Activated CD8-positive, alpha-beta T cell treated with anti-CD3 and anti-CD28 coated beads, Interleukin-2, amount 10 ng/mL, durations not matched to agents 7 days and 5 days (primary cell): ENCODE measurements at regions of chrX and their contacts with region 1.

Region 1: DNA sequence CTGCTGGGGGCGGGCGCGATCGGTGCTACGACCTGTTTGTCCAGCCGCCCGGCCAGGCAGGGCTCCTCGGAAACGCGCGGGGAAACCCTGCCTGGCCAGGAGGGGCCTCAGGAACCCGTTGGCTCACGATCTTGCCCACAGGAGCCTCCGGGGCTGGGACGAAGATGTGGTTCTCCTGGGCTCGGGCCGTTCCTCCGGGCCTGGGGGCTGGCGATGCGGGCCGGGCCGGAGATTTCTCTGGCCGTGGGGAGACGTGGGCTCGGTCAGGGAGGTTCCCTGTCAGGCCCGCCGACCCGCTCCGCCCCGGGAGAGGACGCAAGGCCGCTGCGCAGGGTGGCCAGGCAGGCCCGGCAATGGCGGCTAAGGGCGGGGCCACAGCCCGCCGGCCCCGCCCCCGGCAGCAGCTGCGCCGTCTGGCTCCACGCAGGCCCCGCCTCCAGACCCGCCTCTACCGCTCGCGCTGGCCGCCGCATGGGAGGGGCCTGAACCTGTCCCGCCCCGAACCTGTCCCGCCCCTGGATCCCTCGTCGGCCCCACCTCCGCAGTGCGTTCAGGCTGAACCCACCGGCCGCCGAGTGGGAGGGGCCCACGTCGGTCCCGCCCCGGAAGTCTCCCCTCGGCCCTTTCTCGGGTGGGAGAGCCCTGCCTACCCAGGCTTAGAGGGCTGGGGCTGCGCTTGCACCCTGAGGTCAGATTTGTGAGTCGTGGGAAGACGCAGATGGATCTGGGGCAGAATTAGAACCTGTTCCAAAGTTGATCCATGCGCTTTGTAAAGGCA is at the start of gene FAM3A:
- DNase-seq: peak; percentile 94
- ATAC-seq: peak; percentile 95
- H3K4me3 Mint-ChIP-seq: peak within 1 kb of the TSS; percentile 82
- H3K27ac Mint-ChIP-seq: peak within 1 kb of the TSS; percentile 89
- H3K4me1 Mint-ChIP-seq: peaks cover 33% of the 10 kb centered on the region
- H3K27me3 Mint-ChIP-seq: no peaks in the 10 kb centered on the region
- total RNA-seq, gene FAM3A: 28.5 to 31.6 TPM

Region 2: GRCh38 chrX:154526901-154527675 is 11.0 kb after region 1 on chrX:
- CTCF ChIA-PET with region 1: interaction called, 14 read pairs
- POLR2A ChIA-PET with region 1: no interaction called
- DNase-seq: peak; percentile 75
- ATAC-seq: peak; percentile 93
- H3K4me3 Mint-ChIP-seq: peak overlapping the region; percentile 8
- H3K27ac Mint-ChIP-seq: peak overlapping the region; percentile 84
- H3K4me1 Mint-ChIP-seq: peaks cover 23% of the 10 kb centered on the region
- H3K27me3 Mint-ChIP-seq: no peaks in the 10 kb centered on the region

Region 3: DNA sequence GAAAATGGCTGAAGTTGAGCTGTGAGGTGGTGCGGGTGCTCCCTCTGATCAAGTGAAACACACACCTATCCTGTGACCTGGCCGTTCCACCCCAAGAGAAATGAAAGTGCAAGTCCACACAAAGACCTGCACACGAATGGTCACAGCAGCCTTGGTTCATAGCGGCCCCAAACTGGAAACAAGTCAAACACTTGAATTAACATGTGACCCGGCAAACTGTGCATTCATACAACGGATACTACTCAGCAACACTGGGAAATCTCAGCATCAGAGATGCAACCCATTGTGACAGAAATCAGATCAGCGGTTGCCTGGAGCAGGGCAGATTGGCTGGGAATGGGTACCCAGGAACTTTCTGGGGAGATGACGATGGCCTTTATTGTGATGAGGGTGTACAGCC is 23.0 kb after region 1 on chrX:
- CTCF ChIA-PET with region 1: no interaction called
- POLR2A ChIA-PET with region 1: no interaction called
- DNase-seq: no peak
- ATAC-seq: no peak
- H3K4me3 Mint-ChIP-seq: no peak overlapping the region
- H3K27ac Mint-ChIP-seq: peak overlapping the region; percentile 43
- H3K4me1 Mint-ChIP-seq: peaks cover 34% of the 10 kb centered on the region
- H3K27me3 Mint-ChIP-seq: no peaks in the 10 kb centered on the region

Region 4: DNA sequence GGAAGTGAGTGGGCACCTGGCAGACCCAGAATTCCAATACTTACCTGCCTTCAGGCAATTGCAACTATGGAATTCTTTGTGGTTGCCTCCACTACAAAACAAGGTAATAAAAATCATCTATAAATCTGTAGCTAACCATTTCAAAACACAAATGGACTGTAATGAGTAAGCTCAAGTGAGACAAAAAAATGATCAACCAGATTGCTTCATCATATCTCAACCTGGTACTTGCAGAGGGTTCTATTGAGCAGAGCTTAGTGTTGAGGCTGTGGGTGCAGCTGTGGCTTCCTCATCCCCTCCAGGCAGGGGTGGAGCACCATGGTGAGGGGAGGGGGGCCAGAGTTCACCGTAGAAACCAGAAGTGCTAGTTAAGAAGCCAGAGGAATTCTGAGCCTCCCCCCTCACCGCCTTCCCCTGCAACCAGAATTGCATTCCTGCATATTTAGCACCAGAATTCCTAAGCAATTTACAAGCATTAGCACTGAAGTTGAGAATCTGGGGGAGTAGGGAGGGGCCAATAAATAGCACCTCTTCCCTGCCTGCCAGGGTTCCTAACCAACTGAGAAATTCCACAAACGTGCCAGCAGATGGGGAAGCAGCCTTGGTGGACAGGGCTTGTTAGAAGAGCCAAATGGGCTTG is 80.3 kb after region 1 on chrX:
- CTCF ChIA-PET with region 1: no interaction called
- POLR2A ChIA-PET with region 1: no interaction called
- DNase-seq: no peak
- ATAC-seq: no peak
- H3K4me3 Mint-ChIP-seq: no peak overlapping the region
- H3K27ac Mint-ChIP-seq: no peak overlapping the region
- H3K4me1 Mint-ChIP-seq: peaks cover 23% of the 10 kb centered on the region
- H3K27me3 Mint-ChIP-seq: no peaks in the 10 kb centered on the region